Activated naive CD4-positive, alpha-beta T cell treated with anti-CD3 and anti-CD28 coated beads for 36 hours (primary cell): ENCODE measurements at regions of chr7 and their contacts with region 1.

Region 1: DNA sequence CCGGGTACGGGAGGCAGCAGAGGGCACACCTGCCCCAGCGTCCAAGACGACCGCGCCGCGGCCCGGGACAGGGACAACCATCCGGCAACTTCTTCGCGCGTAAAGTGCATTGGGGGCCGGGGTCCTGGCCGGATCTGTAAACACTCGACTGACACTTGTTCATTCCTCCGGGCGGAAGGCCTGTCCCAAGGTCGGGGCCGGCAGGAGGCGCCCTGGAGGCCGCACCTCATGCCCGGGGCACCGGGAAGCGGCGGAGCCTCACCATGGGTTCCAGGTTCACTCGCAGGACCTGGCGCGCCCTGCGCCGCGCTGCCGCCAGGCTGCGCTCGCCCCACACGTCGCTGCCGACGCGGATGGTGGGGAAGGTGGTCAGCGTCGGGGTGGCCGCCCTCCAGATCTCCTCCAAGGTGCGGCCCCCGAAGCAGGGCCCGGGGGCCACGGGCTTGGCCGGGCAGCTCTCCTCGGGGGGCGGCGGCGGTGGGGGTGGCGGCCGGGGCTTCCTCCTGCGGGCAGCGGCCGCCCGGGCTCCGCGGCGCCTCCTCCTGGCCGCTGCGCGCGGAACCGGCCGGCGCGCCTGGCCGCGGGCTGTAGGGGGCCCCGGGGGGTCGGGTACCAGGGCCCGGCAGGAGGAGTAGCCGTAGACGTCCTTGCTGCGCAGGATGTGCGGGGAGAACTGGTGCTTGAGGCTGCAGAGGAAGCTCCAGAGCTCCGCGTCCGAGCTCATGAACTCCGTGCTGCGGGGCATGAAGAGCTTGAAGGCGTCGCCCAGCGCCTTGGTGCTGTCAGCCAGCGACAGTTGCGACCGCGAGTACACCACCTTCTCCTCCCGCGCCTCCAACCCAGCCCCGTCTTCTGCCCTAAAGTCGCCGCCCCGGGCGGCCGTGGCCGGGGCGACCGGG is 746 bp downstream of the CCDC71L start:
- DNase-seq: peak; percentile 87
- H3K4me3 Mint-ChIP-seq: peak overlapping the region; percentile 87
- H3K27ac Mint-ChIP-seq: peak overlapping the region; percentile 95
- H3K4me1 Mint-ChIP-seq: peaks cover 23% of the 10 kb centered on the region
- H3K27me3 Mint-ChIP-seq: no peaks in the 10 kb centered on the region

Region 2: DNA sequence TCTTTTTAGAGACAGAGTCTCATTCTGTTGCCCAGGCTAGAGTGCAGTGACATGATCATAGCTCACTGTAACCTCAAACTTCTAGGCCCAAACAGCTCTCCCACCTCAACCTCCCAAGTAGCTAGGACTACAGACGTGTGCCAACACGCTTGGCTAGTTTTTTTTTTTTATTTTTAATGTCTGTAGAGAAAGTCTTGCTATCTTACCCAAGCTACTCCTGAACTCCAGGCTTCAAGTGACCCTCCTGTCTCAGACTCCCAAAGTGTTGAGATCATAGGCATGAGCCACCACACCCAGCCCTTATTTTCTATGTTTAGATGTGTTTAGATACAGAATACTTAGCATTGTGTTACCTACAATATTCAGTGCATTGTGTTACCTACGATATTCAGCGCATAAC is 1599.8 kb before region 1 on chr7:
- CTCF ChIA-PET with region 1: no interaction called
- intact Hi-C with region 1: no loop called
- DNase-seq: no peak
- H3K4me3 Mint-ChIP-seq: no peak overlapping the region
- H3K27ac Mint-ChIP-seq: peak overlapping the region; percentile 63
- H3K4me1 Mint-ChIP-seq: peaks cover 57% of the 10 kb centered on the region
- H3K27me3 Mint-ChIP-seq: no peaks in the 10 kb centered on the region

Region 3: GRCh38 chr7:106367018-106367420 is 293.2 kb before region 1 on chr7:
- CTCF ChIA-PET with region 1: no interaction called
- intact Hi-C with region 1: loop called (anchors 5 kb)
- DNase-seq: no peak
- H3K4me3 Mint-ChIP-seq: no peak overlapping the region
- H3K27ac Mint-ChIP-seq: peak overlapping the region; percentile 70
- H3K4me1 Mint-ChIP-seq: peaks cover 44% of the 10 kb centered on the region
- H3K27me3 Mint-ChIP-seq: peaks cover 23% of the 10 kb centered on the region

Region 4: DNA sequence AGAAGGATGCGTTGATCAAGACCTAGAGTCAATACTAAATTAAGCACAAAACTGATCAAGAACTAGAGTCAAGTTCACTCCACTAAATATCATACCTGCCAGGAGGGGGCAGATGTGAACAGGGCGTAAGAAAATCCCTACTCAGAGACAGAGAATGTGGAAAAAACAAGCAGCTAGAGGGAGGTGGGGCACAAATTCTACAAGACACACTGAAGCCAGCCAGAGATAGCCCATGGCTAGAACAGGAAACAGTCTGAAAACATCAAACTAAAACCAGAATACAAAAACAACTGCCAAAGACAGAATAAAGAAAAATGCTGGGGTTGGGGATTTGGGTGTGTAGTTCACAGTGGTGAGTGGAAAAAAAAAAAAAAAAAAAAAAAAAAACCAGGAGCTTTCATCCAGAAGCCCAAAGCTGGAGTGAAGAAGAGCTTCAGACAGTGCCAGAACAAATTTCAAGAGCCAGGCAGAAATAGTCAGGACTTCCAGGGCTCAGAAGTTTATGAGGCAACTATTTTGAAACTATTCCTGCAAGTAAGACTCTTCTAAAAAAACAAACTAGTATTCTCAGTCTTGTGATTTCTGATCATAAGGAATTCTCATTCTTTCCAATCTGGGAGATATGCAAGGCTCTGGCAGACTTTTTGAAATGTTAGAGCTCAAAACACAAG is 117.5 kb before region 1 on chr7:
- CTCF ChIA-PET with region 1: interaction called, 10 read pairs
- intact Hi-C with region 1: loop called (anchors 1 kb)
- DNase-seq: peak; percentile 76
- H3K4me3 Mint-ChIP-seq: no peak overlapping the region
- H3K27ac Mint-ChIP-seq: no peak overlapping the region
- H3K4me1 Mint-ChIP-seq: peaks cover 8% of the 10 kb centered on the region
- H3K27me3 Mint-ChIP-seq: no peaks in the 10 kb centered on the region

Region 5: GRCh38 chr7:106717955-106718871 is 58.0 kb after region 1 on chr7:
- CTCF ChIA-PET with region 1: interaction called, 26 read pairs
- intact Hi-C with region 1: loop called (anchors 1 kb)
- DNase-seq: peak; percentile 92
- H3K4me3 Mint-ChIP-seq: no peak overlapping the region
- H3K27ac Mint-ChIP-seq: no peak overlapping the region
- H3K4me1 Mint-ChIP-seq: peaks cover 10% of the 10 kb centered on the region
- H3K27me3 Mint-ChIP-seq: no peaks in the 10 kb centered on the region

Region 6: GRCh38 chr7:106744563-106745091 is 84.4 kb after region 1 on chr7:
- CTCF ChIA-PET with region 1: interaction called, 11 read pairs
- intact Hi-C with region 1: no loop called
- DNase-seq: peak; percentile 30
- H3K4me3 Mint-ChIP-seq: no peak overlapping the region
- H3K27ac Mint-ChIP-seq: no peak overlapping the region
- H3K4me1 Mint-ChIP-seq: no peaks in the 10 kb centered on the region
- H3K27me3 Mint-ChIP-seq: peaks cover 4% of the 10 kb centered on the region

Region 7: DNA sequence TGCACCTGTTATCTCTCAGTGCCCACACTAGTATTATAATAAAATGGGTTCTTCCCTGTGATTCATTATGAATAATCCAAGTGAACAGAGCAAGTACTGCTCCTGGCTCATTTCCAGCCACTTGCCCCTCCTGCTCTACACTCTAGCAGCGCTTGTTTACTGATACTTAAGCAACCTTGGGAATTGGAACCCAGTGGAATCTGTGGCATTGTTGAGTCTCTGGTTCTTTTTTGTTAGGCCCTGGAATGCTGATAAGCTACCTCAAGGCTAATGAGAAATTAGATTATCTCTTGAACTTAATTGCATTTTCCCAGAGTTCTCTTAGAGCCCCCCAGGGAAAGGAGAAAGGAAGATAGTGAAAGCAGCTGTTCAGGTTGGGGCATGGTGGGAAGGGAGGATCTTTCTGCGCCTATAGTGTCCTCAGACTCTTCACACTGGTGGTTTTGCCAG is 418.3 kb after region 1 on chr7:
- CTCF ChIA-PET with region 1: no interaction called
- intact Hi-C with region 1: no loop called
- DNase-seq: no peak
- H3K4me3 Mint-ChIP-seq: no peak overlapping the region
- H3K27ac Mint-ChIP-seq: no peak overlapping the region
- H3K4me1 Mint-ChIP-seq: no peaks in the 10 kb centered on the region
- H3K27me3 Mint-ChIP-seq: no peaks in the 10 kb centered on the region

Region 8: DNA sequence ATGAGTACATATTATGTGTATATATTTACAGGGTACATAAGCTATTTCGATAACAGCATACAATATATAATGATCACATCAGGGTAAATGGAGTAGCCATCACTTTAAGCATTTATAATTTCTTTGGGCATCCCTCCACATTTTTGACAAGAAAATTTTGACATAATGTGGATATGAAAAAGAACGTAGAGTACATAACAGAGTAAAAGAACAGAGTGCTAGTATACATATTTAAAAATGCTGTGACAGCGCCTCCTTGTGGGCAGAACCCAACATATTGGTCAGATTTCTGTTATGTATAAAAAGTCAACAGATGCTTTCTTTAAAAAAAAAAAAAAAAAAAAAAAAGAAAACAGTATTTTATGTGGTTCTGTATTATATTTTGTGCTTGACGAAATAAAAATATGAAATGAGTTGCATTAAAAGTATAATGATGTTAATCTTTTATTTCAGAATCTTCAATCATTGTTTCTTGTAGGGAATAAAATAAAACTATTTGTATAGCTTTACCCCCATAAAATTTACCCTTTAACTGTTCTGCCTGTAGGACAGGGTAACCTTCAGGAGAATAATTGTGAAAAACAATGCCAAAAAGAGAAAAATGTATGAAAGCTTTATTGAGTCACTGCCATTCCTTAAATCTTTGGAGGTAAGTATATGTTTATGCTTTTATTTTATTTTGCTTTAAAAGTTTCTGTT is 490.3 kb after region 1 on chr7:
- CTCF ChIA-PET with region 1: interaction called, 3 read pairs
- intact Hi-C with region 1: loop called (anchors 5 kb)
- DNase-seq: peak; percentile 91
- H3K4me3 Mint-ChIP-seq: no peak overlapping the region
- H3K27ac Mint-ChIP-seq: no peak overlapping the region
- H3K4me1 Mint-ChIP-seq: peaks cover 4% of the 10 kb centered on the region
- H3K27me3 Mint-ChIP-seq: no peaks in the 10 kb centered on the region